Activated CD8-positive, alpha-beta T cell treated with anti-CD3 and anti-CD28 coated beads for 36 hours (primary cell): ENCODE measurements at regions of chr1 and their contacts with region 1.

Region 1: DNA sequence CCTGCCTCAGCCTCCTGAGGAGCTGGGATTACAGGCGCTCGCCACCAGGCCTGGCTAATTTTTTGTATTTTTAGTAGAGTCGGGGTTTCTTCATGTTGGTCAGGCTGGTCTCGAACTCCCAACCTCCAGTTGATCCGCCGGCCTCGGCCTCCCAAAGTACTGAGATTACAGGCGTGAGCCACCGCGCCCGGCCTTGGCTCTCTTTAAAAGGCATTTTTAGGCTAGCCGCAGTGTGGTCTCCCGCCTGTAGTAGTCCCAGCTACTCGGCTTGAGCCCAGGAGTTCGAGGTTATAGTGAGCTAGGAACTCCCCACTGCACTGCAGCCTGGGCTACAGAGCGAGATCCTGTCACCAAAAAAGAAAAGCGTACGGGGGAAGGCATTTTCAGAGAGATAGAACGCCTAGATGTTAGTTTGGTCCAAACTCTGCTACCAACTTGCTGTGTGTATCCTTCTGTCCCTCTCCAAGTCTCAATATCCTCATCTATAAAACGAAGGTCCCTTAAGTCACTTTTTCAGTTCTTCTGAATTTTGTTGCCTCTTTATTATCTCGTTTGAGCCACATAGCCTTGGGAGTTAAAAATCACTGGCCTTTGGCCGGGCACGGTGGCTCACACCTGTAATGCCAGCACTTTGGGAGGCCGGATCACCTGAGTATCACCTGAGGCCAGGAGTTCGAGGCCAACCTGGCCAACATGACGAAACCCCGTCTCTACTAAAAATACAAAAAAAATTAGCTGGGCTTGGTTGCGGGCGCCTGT is 734 bp downstream of the MED18 start:
- DNase-seq: peak; percentile 57
- ATAC-seq: peak; percentile 10
- H3K4me3 Mint-ChIP-seq: peak overlapping the region; percentile 95
- H3K27ac Mint-ChIP-seq: peak overlapping the region; percentile 98
- H3K4me1 Mint-ChIP-seq: peaks cover 32% of the 10 kb centered on the region
- H3K27me3 Mint-ChIP-seq: no peaks in the 10 kb centered on the region
- CTCF ChIP-seq: no peak

Region 2: DNA sequence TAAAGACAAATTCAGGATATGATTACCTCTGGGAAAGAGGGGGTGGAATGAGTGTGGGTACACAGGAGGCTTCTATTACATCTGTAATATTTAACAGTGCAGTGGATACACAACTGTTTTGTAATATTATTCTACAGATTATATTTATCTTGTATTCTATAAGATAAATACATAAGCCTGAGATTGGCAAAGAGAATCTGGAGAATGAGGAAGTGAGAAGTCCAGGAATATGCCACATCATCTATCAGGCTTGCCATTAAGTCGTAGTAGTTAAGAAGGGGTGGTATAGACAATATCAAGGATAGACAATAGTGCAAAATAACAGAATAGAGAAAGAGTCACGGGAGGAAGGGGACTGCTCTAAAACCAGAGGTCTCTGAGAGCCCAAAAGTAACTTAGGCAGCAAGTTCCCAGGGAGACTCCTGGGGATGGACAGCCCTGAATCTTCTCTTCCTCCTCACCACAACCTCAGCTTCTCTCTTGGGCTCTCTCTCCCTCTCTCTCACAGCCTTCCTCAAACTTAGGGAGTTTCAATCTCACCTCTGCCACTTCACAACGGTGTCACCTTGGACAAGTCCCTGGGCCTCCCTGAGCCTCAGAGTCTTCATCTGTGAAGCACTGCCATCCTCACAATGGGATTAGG is 139.1 kb before region 1 on chr1:
- CTCF ChIA-PET with region 1: no interaction called
- POLR2A ChIA-PET with region 1: no interaction called
- intact Hi-C with region 1: no loop called
- DNase-seq: no peak
- ATAC-seq: no peak
- H3K4me3 Mint-ChIP-seq: no peak overlapping the region
- H3K27ac Mint-ChIP-seq: no peak overlapping the region
- H3K4me1 Mint-ChIP-seq: no peaks in the 10 kb centered on the region
- H3K27me3 Mint-ChIP-seq: no peaks in the 10 kb centered on the region
- CTCF ChIP-seq: no peak

Region 3: DNA sequence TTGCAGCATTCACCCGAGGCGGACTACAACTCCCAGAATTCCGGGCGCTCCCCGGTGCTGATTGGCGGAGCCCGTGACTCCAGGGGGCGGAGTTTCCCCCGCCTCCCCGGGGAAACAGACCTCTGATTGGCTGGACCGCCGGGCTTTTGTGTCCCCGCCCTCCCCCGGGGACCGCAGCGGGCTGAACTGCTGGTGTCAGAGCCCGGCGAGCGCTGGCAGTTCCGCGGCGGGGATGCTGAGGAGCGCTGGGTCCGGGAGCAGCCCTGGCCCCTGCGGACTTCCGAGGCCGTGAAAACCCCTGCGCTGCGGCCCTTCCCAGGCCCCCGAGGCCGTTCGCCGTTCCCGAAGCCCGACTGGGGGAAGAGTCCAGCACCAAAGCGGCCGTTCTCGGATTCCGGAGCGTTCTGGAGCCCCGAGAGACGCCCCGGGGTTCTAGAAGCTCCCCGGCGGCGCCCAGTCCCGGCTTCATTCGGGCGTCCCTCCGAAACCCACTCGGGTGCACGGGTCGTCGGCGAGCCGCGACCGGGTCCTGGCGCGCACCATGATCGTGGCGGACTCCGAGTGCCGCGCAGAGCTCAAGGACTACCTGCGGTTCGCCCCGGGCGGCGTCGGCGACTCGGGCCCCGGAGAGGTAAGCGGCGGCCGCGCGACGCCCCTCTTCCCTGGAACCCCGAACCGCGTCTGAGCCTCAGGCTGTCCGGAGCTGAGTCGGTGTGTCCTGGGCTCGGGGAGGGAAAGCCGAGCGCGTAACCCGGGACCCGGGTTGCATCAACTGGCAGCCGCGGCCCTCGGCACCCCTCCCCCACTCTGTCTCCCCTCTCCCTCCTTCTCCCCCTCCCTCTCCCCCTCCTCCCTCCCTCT is 70.0 kb before region 1 on chr1 and contains the start of gene SESN2:
- CTCF ChIA-PET with region 1: interaction called, 4 read pairs
- POLR2A ChIA-PET with region 1: interaction called, 35 read pairs
- intact Hi-C with region 1: no loop called
- DNase-seq: peak; percentile 100
- ATAC-seq: peak; percentile 94
- H3K4me3 Mint-ChIP-seq: peak within 1 kb of the TSS; percentile 83
- H3K27ac Mint-ChIP-seq: peak within 1 kb of the TSS; percentile 96
- H3K4me1 Mint-ChIP-seq: peaks cover 38% of the 10 kb centered on the region
- H3K27me3 Mint-ChIP-seq: no peaks in the 10 kb centered on the region
- CTCF ChIP-seq: no peak
- total RNA-seq, gene SESN2: 26.0 to 27.4 TPM

Region 4: GRCh38 chr1:28359592-28360239 is 30.1 kb after region 1 on chr1:
- CTCF ChIA-PET with region 1: interaction called, 28 read pairs
- POLR2A ChIA-PET with region 1: interaction called, 3 read pairs
- intact Hi-C with region 1: no loop called
- DNase-seq: peak; percentile 93
- ATAC-seq: peak; percentile 84
- H3K4me3 Mint-ChIP-seq: no peak overlapping the region
- H3K27ac Mint-ChIP-seq: no peak overlapping the region
- H3K4me1 Mint-ChIP-seq: peaks cover 2% of the 10 kb centered on the region
- H3K27me3 Mint-ChIP-seq: no peaks in the 10 kb centered on the region
- CTCF ChIP-seq: peak; percentile 80

Region 5: DNA sequence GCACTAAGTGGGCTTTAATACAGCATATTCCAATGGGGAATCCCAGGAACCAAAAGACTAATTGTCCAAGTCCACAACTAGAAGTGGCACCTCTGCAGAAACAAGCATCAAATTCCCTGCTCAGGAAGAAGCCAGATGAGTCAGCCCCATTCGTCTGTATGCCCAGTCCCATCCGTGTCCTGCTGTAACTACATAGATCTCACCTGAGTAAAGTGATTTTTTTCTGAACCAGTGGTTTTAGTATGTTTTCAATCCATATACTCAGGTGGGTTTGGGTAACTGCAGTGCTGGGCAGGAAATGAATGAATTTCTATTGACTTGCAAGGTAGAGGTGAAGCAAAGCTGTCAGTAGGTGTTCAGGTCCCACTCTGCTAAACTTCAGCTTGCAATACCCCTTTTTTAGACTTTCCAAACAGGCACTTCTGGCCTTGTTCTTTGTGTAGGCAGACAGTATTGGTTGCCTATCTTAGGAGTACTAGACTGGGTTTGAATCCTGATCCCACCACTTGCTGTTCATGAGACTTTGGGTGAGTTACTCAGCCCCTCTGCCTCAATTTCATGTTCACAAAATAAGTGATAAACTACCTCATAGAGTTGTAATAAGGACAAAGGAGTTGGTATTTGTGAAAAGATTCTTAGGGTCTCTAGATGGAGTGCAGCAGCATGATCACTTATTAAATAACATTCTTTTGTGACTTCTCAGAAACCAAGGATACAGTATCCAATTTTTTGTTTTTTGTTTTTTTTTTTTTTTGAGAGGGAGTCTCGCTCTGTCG is 181.3 kb after region 1 on chr1:
- CTCF ChIA-PET with region 1: no interaction called
- POLR2A ChIA-PET with region 1: interaction called, 45 read pairs
- intact Hi-C with region 1: no loop called
- DNase-seq: peak; percentile 33
- ATAC-seq: peak; percentile 5
- H3K4me3 Mint-ChIP-seq: peak overlapping the region; percentile 94
- H3K27ac Mint-ChIP-seq: peak overlapping the region; percentile 95
- H3K4me1 Mint-ChIP-seq: peaks cover 33% of the 10 kb centered on the region
- H3K27me3 Mint-ChIP-seq: peaks cover 1% of the 10 kb centered on the region
- CTCF ChIP-seq: no peak